ENCODE measurements at regions of chr17 and their contacts with region 1.

Region 1: GRCh38 chr17:1275962-1276736 is 3.3 kb upstream of the TRARG1 start:
- DNase-seq: peak; percentile 49 to 84 (median 79)
- ATAC-seq: peak; percentile 90
- H3K4me3 ChIP-seq: no peak overlapping the region
- H3K4me3 Mint-ChIP-seq: no peak overlapping the region
- H3K27ac ChIP-seq: no peak overlapping the region
- H3K27ac Mint-ChIP-seq: no peak overlapping the region
- H3K4me1 ChIP-seq: no peaks in the 10 kb centered on the region
- H3K4me1 Mint-ChIP-seq: peaks cover 8% of the 10 kb centered on the region
- H3K27me3 ChIP-seq: no peaks in the 10 kb centered on the region
- H3K27me3 Mint-ChIP-seq: peaks cover 32% of the 10 kb centered on the region
- CTCF ChIP-seq: peak; percentile 88

Region 2: GRCh38 chr17:1260086-1260769 is 15.9 kb before region 1 on chr17:
- CTCF ChIA-PET with region 1: interaction called, 5 read pairs
- POLR2A ChIA-PET with region 1: no interaction called
- intact Hi-C with region 1: loop called in 1 of 2 experiments (anchors 1 kb)
- DNase-seq: no peak
- ATAC-seq: no peak
- H3K4me3 ChIP-seq: peak overlapping the region in 1 of 2 experiments; percentile 49
- H3K4me3 Mint-ChIP-seq: peak overlapping the region; percentile 49
- H3K27ac ChIP-seq: no peak overlapping the region
- H3K27ac Mint-ChIP-seq: no peak overlapping the region
- H3K4me1 ChIP-seq: peaks cover 24% of the 10 kb centered on the region
- H3K4me1 Mint-ChIP-seq: peaks cover 31% of the 10 kb centered on the region
- H3K27me3 ChIP-seq: peaks cover 0 to 6% of the 10 kb centered on the region in 2 experiments
- H3K27me3 Mint-ChIP-seq: peaks cover 18% of the 10 kb centered on the region
- CTCF ChIP-seq: no peak

Region 3: DNA sequence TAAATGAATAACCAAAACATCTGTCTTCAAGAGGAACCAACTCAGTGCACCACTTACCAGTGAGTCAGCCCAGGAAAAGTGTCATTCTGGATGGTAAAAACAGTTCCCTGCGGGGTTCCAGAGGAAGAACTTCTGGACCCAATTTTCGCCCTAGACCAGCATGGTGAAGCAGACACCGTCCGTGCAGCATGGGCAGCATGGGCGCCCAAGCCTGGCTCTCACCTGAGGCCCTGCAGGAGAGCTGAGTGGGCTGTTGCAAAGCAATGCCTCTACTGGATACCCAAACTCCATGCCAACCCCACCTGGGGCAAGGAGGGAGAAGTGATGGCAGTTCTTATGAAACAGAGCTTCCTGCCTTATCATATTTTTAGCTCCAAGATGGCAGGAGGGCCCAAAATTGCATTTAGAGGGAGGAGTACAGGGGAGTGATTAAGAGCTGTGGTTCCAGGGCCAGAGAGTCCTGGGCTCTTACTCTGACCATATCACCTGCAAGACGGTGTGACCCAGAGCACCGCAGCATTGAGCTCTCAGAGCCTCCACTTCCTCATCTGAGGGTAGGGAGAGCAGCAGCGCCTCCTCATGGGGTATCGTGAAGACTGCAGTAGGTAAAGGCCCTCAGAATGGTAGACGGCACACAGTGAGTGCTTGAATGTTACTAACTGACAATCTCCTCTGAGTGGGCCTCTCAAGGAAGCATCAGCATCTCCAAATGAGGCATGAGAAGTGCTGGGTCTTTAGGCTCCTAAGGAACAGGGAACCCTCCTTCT is 256.9 kb after region 1 on chr17:
- CTCF ChIA-PET with region 1: no interaction called
- POLR2A ChIA-PET with region 1: no interaction called
- intact Hi-C with region 1: loop called in 1 of 2 experiments (anchors 5 kb)
- DNase-seq: peak in 8 of 9 experiments; percentile 9 to 66 (median 51)
- ATAC-seq: peak; percentile 93
- H3K4me3 ChIP-seq: no peak overlapping the region
- H3K4me3 Mint-ChIP-seq: no peak overlapping the region
- H3K27ac ChIP-seq: no peak overlapping the region
- H3K27ac Mint-ChIP-seq: peak overlapping the region; percentile 55
- H3K4me1 ChIP-seq: no peaks in the 10 kb centered on the region
- H3K4me1 Mint-ChIP-seq: no peaks in the 10 kb centered on the region
- H3K27me3 ChIP-seq: no peaks in the 10 kb centered on the region
- H3K27me3 Mint-ChIP-seq: no peaks in the 10 kb centered on the region
- CTCF ChIP-seq: peak; percentile 41